ENCODE measurements at regions of chr2 and their contacts with region 1.

Region 1: DNA sequence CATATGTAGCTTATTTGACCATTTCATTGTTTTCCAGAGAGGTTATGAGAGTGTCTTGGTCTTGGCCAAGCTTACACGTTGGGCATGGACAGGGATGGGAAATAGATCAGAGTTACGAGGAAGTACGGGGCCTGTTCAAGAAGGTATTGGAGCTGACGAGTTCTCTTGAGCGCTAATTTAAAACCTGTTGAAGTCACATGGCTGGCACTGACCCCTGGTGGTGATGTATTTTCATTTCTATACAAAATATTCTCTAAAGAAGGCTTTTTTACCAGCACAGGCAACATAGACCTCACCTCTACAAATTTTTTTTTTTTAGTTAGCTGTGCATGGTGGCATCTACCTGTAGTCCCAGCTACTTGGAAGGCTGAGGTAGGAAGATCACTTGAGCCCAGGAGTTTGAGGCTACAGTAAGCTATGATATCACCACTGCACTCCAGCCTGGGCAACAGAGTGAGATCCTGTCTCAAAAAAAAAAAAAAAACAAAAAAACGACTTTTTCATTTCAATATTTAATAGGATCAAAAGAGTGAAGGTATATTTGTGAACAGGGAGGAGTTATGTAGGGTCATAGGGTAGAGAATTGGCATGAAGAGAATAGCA is 19.6 kb downstream of the UGP2 start:
- DNase-seq: peak; percentile 34
- ATAC-seq: no peak
- H3K4me3 Mint-ChIP-seq: no peak overlapping the region
- H3K27ac Mint-ChIP-seq: no peak overlapping the region
- H3K4me1 Mint-ChIP-seq: peaks cover 29% of the 10 kb centered on the region
- H3K27me3 Mint-ChIP-seq: no peaks in the 10 kb centered on the region

Region 2: DNA sequence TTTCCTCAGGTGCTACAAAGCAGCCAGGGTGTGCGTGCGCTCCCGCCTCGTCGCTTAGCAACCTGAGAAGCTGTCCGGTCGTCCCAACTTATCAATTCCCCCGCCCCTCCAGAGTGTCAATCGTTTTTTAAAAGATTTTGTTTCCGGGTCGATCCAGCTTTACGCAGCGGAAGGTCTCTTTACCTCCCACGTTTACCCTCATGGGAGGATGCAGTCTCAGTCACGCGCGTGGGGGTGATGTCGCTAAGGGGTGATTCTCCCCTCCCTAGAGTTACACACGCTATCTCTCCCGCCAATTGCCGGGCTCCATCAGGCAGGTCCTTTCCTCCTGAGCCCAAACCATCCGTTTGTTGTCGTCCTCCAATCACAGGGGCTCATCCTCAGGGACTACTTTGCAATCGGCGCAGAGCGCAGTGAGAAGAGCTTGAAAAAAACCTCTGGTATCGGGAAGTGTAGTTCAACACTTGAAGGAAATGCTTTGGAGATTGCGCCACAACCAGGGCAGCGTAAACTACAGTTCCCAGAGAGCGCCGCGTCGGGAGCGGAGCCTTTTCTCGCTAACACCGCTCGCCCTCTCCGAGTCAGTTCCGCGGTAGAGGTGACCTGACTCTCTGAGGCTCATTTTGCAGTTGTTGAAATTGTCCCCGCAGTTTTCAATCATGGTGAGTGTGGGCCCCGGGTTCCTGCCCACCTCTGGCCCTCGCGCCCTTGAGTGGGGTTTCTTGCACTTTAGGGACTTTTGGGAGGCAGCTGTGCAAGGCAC is 272.8 kb before region 1 on chr2 and contains the starts of genes MDH1 and WDPCP:
- POLR2A ChIA-PET with region 1: interaction called, 11 read pairs
- DNase-seq: peak; percentile 84
- ATAC-seq: peak; percentile 90
- H3K4me3 Mint-ChIP-seq: peak within 1 kb of the TSS; percentile 91
- H3K27ac Mint-ChIP-seq: peak within 1 kb of the TSS; percentile 98
- H3K4me1 Mint-ChIP-seq: peaks cover 21% of the 10 kb centered on the region
- H3K27me3 Mint-ChIP-seq: no peaks in the 10 kb centered on the region
- total RNA-seq, gene MDH1: 161 to 163 TPM
- total RNA-seq, gene WDPCP: 10.5 to 12.0 TPM

Region 3: GRCh38 chr2:63661076-63661475 is 200.2 kb before region 1 on chr2:
- POLR2A ChIA-PET with region 1: no interaction called
- DNase-seq: no peak
- ATAC-seq: no peak
- H3K4me3 Mint-ChIP-seq: no peak overlapping the region
- H3K27ac Mint-ChIP-seq: no peak overlapping the region
- H3K4me1 Mint-ChIP-seq: no peaks in the 10 kb centered on the region
- H3K27me3 Mint-ChIP-seq: peaks cover 2% of the 10 kb centered on the region

Measured in activated naive CD8-positive, alpha-beta T cell treated with anti-CD3 and anti-CD28 coated beads, Interleukin-2, amount 10 ng/mL, durations not matched to agents 7 days and 5 days (primary cell).